CD4-positive, alpha-beta T cell (primary cell): ENCODE measurements at regions of chr11 and their contacts with region 1.

Region 1: GRCh38 chr11:128086794-128087193 is 500.6 kb downstream of the ETS1 start:
- DNase-seq: peak in 6 of 14 experiments; percentile 7 to 53 (median 32)
- ATAC-seq: peak; percentile 72
- H3K4me3 ChIP-seq: no peak overlapping the region
- H3K4me3 Mint-ChIP-seq: peak overlapping the region; percentile 2
- H3K27ac ChIP-seq: no peak overlapping the region
- H3K27ac Mint-ChIP-seq: peak overlapping the region; percentile 37
- H3K4me1 ChIP-seq: peaks cover 18% of the 10 kb centered on the region
- H3K4me1 Mint-ChIP-seq: peaks cover 54% of the 10 kb centered on the region
- H3K27me3 ChIP-seq: no peaks in the 10 kb centered on the region
- H3K27me3 Mint-ChIP-seq: no peaks in the 10 kb centered on the region
- CTCF ChIP-seq: peak; percentile 22

Region 2: GRCh38 chr11:128026596-128026995 is 60.2 kb before region 1 on chr11:
- CTCF ChIA-PET with region 1: no interaction called
- POLR2A ChIA-PET with region 1: no interaction called
- intact Hi-C with region 1: loop called in 1 of 2 experiments (anchors 2 kb)
- DNase-seq: peak in 1 of 14 experiments; percentile 41
- ATAC-seq: no peak
- H3K4me3 ChIP-seq: no peak overlapping the region
- H3K4me3 Mint-ChIP-seq: no peak overlapping the region
- H3K27ac ChIP-seq: no peak overlapping the region
- H3K27ac Mint-ChIP-seq: no peak overlapping the region
- H3K4me1 ChIP-seq: peaks cover under 1% of the 10 kb centered on the region
- H3K4me1 Mint-ChIP-seq: peaks cover 4% of the 10 kb centered on the region
- H3K27me3 ChIP-seq: peaks cover 0 to 3% of the 10 kb centered on the region in 2 experiments
- H3K27me3 Mint-ChIP-seq: peaks cover 3% of the 10 kb centered on the region
- CTCF ChIP-seq: no peak